Activated naive CD4-positive, alpha-beta T cell treated with anti-CD3 and anti-CD28 coated beads for 36 hours (primary cell): ENCODE measurements at regions of chr20 and their contacts with region 1.

Region 1: GRCh38 chr20:31879143-31879987 is 8.9 kb downstream of the TTLL9 start:
- DNase-seq: peak; percentile 78
- H3K4me3 Mint-ChIP-seq: peak overlapping the region; percentile 88
- H3K27ac Mint-ChIP-seq: peak overlapping the region; percentile 50
- H3K4me1 Mint-ChIP-seq: peaks cover 13% of the 10 kb centered on the region
- H3K27me3 Mint-ChIP-seq: peaks cover 2% of the 10 kb centered on the region

Region 2: GRCh38 chr20:31508517-31509244 is 370.7 kb before region 1 on chr20:
- CTCF ChIA-PET with region 1: no interaction called
- intact Hi-C with region 1: no loop called
- DNase-seq: no peak
- H3K4me3 Mint-ChIP-seq: no peak overlapping the region
- H3K27ac Mint-ChIP-seq: no peak overlapping the region
- H3K4me1 Mint-ChIP-seq: no peaks in the 10 kb centered on the region
- H3K27me3 Mint-ChIP-seq: peaks cover 1% of the 10 kb centered on the region

Region 3: DNA sequence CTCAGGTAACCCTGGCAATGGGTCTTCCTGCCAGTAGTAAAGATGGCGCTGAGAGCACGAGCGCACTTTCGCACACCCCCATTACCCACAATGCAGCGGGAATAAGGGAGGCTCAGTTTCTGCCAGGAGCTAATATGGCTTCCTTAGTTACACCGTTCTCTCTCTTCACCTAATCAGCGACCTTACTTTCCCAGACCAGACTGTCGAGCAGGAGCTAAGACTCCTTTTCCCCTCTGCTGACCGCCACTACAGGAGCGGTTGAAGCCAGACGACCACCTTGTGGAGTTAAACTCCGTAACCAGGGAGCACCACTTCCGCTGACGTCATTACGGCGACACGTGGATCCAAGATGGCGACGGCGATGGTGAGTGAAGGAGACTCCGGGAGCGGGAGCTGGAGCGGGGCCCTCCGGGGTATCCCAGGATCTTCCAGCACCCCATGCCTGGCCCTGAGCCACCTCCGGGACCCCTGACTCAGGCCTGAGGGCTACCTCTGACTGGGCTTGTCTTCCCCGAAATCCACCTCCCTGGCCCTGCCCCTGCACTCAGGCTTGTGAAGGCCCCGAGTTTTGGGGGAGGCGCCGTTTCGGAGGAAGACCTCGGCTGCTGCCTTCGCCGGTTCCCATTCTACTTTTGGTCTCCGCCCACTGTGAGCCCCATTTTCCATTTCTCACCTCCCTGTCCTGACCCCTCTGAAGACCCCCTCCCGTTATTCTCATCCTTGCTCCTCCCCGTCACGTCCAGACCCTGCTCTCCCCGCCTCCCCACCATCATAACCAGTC is 230.2 kb after region 1 on chr20 and contains the start of gene TM9SF4:
- CTCF ChIA-PET with region 1: no interaction called
- intact Hi-C with region 1: loop called (anchors 1 kb)
- DNase-seq: peak; percentile 94
- H3K4me3 Mint-ChIP-seq: peak within 1 kb of the TSS; percentile 91
- H3K27ac Mint-ChIP-seq: peak within 1 kb of the TSS; percentile 100
- H3K4me1 Mint-ChIP-seq: peaks cover 36% of the 10 kb centered on the region
- H3K27me3 Mint-ChIP-seq: no peaks in the 10 kb centered on the region
- total RNA-seq, gene TM9SF4: 37.9 to 39.1 TPM

Region 4: DNA sequence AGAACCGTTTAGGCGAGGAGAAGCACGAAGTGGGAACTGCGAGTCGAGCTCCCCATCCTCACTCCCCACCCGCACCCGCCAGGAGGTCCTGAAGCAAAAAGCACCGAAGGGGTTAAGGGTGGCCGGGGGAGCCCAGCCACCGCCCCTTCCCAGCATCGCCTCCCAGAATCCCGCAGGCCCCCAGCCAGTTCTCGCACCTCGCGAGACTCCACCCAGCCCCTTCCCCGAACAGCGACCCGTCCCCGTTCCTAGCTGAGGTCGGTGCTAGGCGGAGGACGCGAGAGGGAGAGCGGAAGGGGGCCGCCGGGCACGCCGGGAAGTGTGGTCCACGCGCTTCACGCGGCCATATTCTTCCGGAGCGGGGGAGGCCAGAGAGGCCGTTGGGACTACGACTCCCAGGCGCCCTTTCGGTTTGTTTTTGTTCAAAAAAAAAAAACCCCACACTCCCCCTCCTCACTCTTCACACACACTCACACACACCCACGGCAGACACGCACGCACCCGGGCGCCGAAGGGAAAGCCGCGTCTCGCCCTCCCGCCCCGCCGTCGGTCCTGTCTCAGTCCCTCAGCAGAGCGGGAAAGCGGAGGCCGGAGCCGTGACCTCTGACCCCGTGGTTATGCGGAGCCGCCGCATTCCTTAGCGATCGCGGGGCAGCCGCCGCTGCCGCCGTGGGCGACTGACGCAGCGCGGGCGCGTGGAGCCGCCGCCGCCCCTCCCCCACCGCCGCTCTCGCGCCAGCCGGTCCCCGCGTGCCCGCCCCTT is 478.7 kb after region 1 on chr20 and contains the start of gene ASXL1:
- CTCF ChIA-PET with region 1: no interaction called
- intact Hi-C with region 1: no loop called
- DNase-seq: peak; percentile 97
- H3K4me3 Mint-ChIP-seq: peak within 1 kb of the TSS; percentile 97
- H3K27ac Mint-ChIP-seq: peak within 1 kb of the TSS; percentile 100
- H3K4me1 Mint-ChIP-seq: peaks cover 67% of the 10 kb centered on the region
- H3K27me3 Mint-ChIP-seq: no peaks in the 10 kb centered on the region
- total RNA-seq, gene ASXL1: 155 to 162 TPM